Right cardiac atrium (tissue), 5 donors: ENCODE measurements at regions of chr12 and their contacts with region 1.

Region 1: GRCh38 chr12:546921-547845 is 87.4 kb downstream of the B4GALNT3 start:
- DNase-seq: peak; percentile 70 to 90 (median 85)
- ATAC-seq: peak; percentile 66 to 83
- H3K4me3 ChIP-seq: no peak overlapping the region
- H3K27ac ChIP-seq: no peak overlapping the region
- H3K4me1 ChIP-seq: peaks cover 6% of the 10 kb centered on the region
- H3K27me3 ChIP-seq: no peaks in the 10 kb centered on the region

Region 2: GRCh38 chr12:442235-442884 is 104.8 kb before region 1 on chr12:
- intact Hi-C with region 1: loop called in 1 of 4 experiments (anchors 2 kb)
- DNase-seq: no peak
- ATAC-seq: peak in 1 of 2 donors; percentile 50
- H3K4me3 ChIP-seq: no peak overlapping the region
- H3K27ac ChIP-seq: no peak overlapping the region
- H3K4me1 ChIP-seq: no peaks in the 10 kb centered on the region
- H3K27me3 ChIP-seq: no peaks in the 10 kb centered on the region

Region 3: GRCh38 chr12:499837-500458 is 47.2 kb before region 1 on chr12:
- intact Hi-C with region 1: no loop called
- DNase-seq: peak; percentile 48 to 81 (median 79)
- ATAC-seq: peak; percentile 69 to 78
- H3K4me3 ChIP-seq: no peak overlapping the region
- H3K27ac ChIP-seq: no peak overlapping the region
- H3K4me1 ChIP-seq: peaks cover 4% of the 10 kb centered on the region
- H3K27me3 ChIP-seq: no peaks in the 10 kb centered on the region